Activated B cell treated with CpG ODN at 0.5 μM for 24 hours (primary cell): ENCODE measurements at regions of chr1 and their contacts with region 1.

Region 1: GRCh38 chr1:243287652-243288051 is 31.8 kb downstream of the SDCCAG8 start:
- DNase-seq: no peak
- ATAC-seq: peak; percentile 87
- H3K4me3 Mint-ChIP-seq: peak overlapping the region; percentile 53
- H3K27ac Mint-ChIP-seq: peak overlapping the region; percentile 89
- H3K4me1 Mint-ChIP-seq: peaks cover 58% of the 10 kb centered on the region
- H3K27me3 Mint-ChIP-seq: no peaks in the 10 kb centered on the region
- CTCF ChIP-seq: no peak

Region 2: DNA sequence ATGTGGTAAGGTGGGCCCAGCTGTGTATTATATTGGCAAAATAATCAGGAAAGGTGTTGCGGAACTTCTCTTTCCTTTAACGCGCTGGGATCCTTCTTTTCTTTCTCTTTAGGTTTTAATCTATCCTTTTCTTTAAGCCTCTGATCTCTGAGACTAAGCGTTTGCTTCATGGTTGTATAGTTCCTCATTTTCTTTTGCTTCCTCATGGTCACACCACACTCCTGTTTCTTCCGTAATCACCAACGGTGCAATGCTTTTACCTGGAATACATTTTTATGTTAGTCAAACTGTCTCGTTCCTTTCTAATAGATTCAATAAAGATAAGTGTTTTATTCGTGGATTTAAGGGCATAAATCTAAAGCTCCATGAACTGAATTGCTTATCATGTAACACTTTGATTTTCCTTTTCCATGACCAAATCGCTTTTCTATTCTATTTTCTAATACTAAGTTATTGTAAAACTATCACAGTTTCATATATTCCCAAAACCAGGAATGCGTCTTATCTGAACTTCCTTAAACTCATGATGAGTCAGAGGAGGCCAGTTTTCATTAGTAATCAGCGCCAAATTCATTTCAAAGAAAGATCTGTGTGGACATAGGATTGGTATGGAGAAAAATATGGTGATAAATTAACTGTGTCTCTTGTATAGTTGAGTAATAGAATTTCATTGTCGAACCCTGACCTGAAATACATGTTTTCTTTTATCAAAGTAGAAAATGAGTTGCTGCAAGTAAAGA is 19.6 kb before region 1 on chr1:
- CTCF ChIA-PET with region 1: no interaction called
- POLR2A ChIA-PET with region 1: interaction called, 4 read pairs
- intact Hi-C with region 1: loop called (anchors 1 kb)
- DNase-seq: no peak
- ATAC-seq: peak; percentile 51
- H3K4me3 Mint-ChIP-seq: peak overlapping the region; percentile 63
- H3K27ac Mint-ChIP-seq: peak overlapping the region; percentile 47
- H3K4me1 Mint-ChIP-seq: peaks cover 46% of the 10 kb centered on the region
- H3K27me3 Mint-ChIP-seq: no peaks in the 10 kb centered on the region
- CTCF ChIP-seq: no peak

Region 3: DNA sequence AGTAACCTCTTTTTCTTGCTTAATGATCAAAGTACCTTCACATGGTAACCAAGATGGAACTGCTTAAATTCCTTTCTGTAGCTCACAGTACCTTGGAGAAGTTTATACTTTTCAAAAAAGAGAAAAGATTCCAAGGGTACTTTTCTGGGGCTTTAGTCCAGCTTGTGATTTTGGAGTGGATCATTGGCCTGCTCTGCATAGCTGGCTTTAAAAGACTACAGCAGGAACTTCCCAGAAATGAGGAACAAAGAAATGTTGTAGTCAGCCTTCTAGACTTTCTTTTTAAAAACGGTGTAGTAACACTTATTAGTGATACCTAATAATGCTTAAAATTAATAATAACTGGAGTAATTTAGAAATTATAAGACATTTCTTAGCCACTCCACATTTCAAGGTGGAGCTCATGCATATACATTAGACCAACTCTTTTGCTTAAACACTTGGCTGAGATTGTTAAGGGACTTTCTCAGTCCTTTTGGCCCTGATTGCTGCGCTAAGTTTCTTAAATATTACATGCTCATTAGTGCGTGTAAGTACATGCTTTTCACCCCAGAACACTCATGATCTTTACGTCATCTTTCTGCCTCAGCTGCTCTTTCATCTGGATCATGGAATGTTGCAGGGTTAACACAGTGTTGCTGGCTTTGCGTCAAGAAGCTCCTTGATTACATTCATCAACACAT is 25.4 kb after region 1 on chr1:
- CTCF ChIA-PET with region 1: interaction called, 4 read pairs
- POLR2A ChIA-PET with region 1: interaction called, 29 read pairs
- intact Hi-C with region 1: loop called (anchors 1 kb)
- DNase-seq: no peak
- ATAC-seq: peak; percentile 72
- H3K4me3 Mint-ChIP-seq: peak overlapping the region; percentile 71
- H3K27ac Mint-ChIP-seq: peak overlapping the region; percentile 88
- H3K4me1 Mint-ChIP-seq: peaks cover 31% of the 10 kb centered on the region
- H3K27me3 Mint-ChIP-seq: no peaks in the 10 kb centered on the region
- CTCF ChIP-seq: no peak